Activated CD4-positive, alpha-beta T cell treated with anti-CD3 and anti-CD28 coated beads for 36 hours (primary cell): ENCODE measurements at regions of chr13 and their contacts with region 1.

Region 1: DNA sequence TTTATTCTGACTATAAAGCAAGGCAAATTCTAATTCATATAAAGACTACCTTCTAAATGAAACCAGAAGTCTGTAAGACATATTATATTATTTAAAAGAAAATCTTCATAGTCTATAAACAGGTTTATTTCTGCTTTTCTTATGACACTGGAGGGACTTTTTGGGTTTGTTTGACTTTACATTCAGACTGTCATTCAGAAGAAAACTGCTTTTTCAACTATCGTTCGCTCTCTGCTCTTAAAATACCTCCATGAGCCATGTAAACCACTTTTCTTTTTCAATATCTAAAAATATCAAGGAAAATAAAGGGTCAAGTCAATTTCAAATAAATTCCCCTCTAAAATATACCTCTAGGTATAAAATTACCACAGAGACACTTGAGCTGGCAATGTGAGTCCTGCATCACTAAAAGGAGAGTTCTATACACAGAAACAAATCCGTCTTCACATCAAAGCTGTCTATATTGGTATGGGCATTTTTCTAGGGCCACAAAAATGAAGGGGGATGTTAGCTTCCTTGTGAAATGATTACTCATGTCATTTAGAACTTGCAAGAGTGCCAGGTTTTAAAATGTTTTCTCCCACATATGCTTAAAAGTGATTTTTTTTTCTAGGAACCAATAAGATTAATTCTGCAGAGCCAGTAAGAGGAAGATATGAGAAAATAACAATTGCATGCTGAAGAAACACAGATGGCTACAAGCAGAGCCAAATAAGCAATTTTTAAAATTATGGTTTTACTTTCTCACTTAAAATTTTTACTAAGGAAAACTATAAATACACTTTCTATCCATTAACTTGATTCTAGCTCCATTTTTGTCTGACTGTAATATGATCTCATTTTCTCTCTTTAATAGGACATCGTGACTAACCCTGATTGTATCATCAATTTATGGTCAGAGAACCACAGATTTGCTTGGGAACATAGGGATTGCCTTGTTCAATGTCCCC is 181.8 kb downstream of the TBC1D4 start:
- DNase-seq: no peak
- ATAC-seq: peak; percentile 86
- H3K4me3 Mint-ChIP-seq: no peak overlapping the region
- H3K27ac Mint-ChIP-seq: peak overlapping the region; percentile 70
- H3K4me1 Mint-ChIP-seq: peaks cover 56% of the 10 kb centered on the region
- H3K27me3 Mint-ChIP-seq: no peaks in the 10 kb centered on the region

Region 2: DNA sequence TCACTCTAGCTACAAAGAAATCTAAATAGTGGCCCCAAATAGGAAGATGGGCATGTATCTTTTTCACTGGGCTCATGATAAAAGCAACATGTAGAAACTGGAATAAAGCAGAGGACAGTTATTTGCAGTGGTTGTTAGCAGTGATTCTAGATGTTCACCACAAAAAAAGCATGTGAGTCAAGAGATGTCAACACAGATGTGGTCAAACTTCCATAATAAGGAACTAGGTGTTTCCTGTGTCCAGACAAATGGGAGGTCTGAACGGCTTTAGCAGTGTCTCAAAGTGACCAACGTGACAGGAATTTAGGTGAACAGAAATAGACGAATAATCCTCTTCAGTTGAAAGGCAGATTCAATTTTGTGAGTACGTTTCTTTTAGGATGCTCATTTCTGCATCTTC is 19.1 kb after region 1 on chr13:
- CTCF ChIA-PET with region 1: interaction called, 3 read pairs
- POLR2A ChIA-PET with region 1: no interaction called
- intact Hi-C with region 1: loop called in 1 of 2 experiments (anchors 2 kb)
- DNase-seq: no peak
- ATAC-seq: no peak
- H3K4me3 Mint-ChIP-seq: peak overlapping the region; percentile 10
- H3K27ac Mint-ChIP-seq: peak overlapping the region; percentile 95
- H3K4me1 Mint-ChIP-seq: peaks cover 69% of the 10 kb centered on the region
- H3K27me3 Mint-ChIP-seq: no peaks in the 10 kb centered on the region